Activated CD4-positive, alpha-beta memory T cell treated with anti-CD3 and anti-CD28 coated beads, Interleukin-2, amount 10 ng/mL, durations not matched to agents 7 days and 5 days (primary cell): ENCODE measurements at regions of chr4 and their contacts with region 1.

Region 1: GRCh38 chr4:81351654-81352445 is 119.9 kb downstream of the RASGEF1B start:
- DNase-seq: peak; percentile 62
- H3K4me3 Mint-ChIP-seq: no peak overlapping the region
- H3K27ac Mint-ChIP-seq: no peak overlapping the region
- H3K4me1 Mint-ChIP-seq: no peaks in the 10 kb centered on the region
- H3K27me3 Mint-ChIP-seq: peaks cover 9% of the 10 kb centered on the region

Region 2: GRCh38 chr4:81069706-81070331 is 282.0 kb before region 1 on chr4:
- CTCF ChIA-PET with region 1: interaction called, 33 read pairs
- POLR2A ChIA-PET with region 1: no interaction called
- DNase-seq: peak; percentile 52
- H3K4me3 Mint-ChIP-seq: no peak overlapping the region
- H3K27ac Mint-ChIP-seq: no peak overlapping the region
- H3K4me1 Mint-ChIP-seq: no peaks in the 10 kb centered on the region
- H3K27me3 Mint-ChIP-seq: peaks cover 9% of the 10 kb centered on the region

Region 3: DNA sequence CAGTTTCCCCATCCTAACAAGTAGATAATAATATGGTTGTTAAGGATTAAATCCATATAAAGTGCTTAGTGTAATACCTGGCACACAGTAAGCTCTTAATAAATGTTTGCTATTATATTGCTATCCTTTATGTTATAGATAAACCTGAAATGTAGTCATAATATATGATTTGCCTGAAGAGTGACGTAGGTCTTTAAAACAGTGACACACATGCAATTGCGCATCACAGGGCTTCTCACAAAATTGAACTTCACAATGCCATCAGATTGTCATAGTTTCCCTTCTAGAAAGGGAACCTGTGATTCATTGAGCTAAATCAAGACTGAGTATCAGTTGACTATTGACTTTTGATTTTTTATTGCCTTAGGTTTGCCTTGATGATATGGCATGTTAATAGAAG is 55.8 kb before region 1 on chr4:
- CTCF ChIA-PET with region 1: no interaction called
- POLR2A ChIA-PET with region 1: no interaction called
- DNase-seq: no peak
- H3K4me3 Mint-ChIP-seq: no peak overlapping the region
- H3K27ac Mint-ChIP-seq: no peak overlapping the region
- H3K4me1 Mint-ChIP-seq: no peaks in the 10 kb centered on the region
- H3K27me3 Mint-ChIP-seq: peaks cover 5% of the 10 kb centered on the region

Region 4: DNA sequence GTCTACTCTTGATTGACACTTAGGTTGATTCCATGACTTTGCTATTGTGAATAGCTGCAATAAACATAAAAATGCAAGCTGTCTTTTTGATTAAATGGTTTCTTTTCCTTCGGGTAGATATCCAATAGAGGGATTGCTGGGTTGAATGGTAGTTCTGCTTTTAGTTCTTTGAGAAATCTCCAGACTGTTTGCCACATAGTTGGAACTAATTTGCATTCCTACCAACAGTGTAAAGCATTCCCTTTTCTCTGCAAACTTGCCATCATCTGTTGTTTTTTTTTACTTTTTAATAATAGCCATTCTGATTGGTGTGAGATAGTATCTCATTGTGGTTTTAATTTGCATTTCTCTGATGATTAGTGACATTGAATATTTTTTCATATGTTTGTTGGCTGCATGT is 14.6 kb before region 1 on chr4:
- CTCF ChIA-PET with region 1: no interaction called
- POLR2A ChIA-PET with region 1: no interaction called
- DNase-seq: no peak
- H3K4me3 Mint-ChIP-seq: no peak overlapping the region
- H3K27ac Mint-ChIP-seq: no peak overlapping the region
- H3K4me1 Mint-ChIP-seq: no peaks in the 10 kb centered on the region
- H3K27me3 Mint-ChIP-seq: peaks cover 11% of the 10 kb centered on the region